Activated T-helper 1 cell treated with anti-CD3 and anti-CD28 coated beads, Interleukin-12 subunit alpha, Interleukin-12 subunit beta, Interleukin-2, Interleukin-4 antibody, amounts not matched to agents 30 ng/mL and 10 ng/mL and 1 ng/mL, durations not matched to agents 14 hours and 24 hours and 36 hours (primary cell): ENCODE measurements at regions of chr16 and their contacts with region 1.

Region 1: GRCh38 chr16:56916571-56917403 is 15.2 kb upstream of the HERPUD1 start:
- DNase-seq: peak; percentile 43
- H3K4me3 Mint-ChIP-seq: peak overlapping the region; percentile 71
- H3K27ac Mint-ChIP-seq: peak overlapping the region; percentile 93
- H3K4me1 Mint-ChIP-seq: peaks cover 50% of the 10 kb centered on the region
- H3K27me3 Mint-ChIP-seq: no peaks in the 10 kb centered on the region

Region 2: GRCh38 chr16:56781528-56781961 is 135.2 kb before region 1 on chr16:
- intact Hi-C with region 1: no loop called
- DNase-seq: no peak
- H3K4me3 Mint-ChIP-seq: no peak overlapping the region
- H3K27ac Mint-ChIP-seq: no peak overlapping the region
- H3K4me1 Mint-ChIP-seq: peaks cover 39% of the 10 kb centered on the region
- H3K27me3 Mint-ChIP-seq: no peaks in the 10 kb centered on the region

Region 3: GRCh38 chr16:56866943-56867830 is 49.6 kb before region 1 on chr16:
- intact Hi-C with region 1: loop called (anchors 2 kb)
- DNase-seq: peak; percentile 24
- H3K4me3 Mint-ChIP-seq: no peak overlapping the region
- H3K27ac Mint-ChIP-seq: no peak overlapping the region
- H3K4me1 Mint-ChIP-seq: peaks cover 22% of the 10 kb centered on the region
- H3K27me3 Mint-ChIP-seq: no peaks in the 10 kb centered on the region

Region 4: GRCh38 chr16:56931892-56932720 is 15.3 kb after region 1 on chr16 and contains the start of gene HERPUD1:
- intact Hi-C with region 1: loop called (anchors 1 kb)
- DNase-seq: peak; percentile 99
- H3K4me3 Mint-ChIP-seq: peak within 1 kb of the TSS; percentile 95
- H3K27ac Mint-ChIP-seq: peak within 1 kb of the TSS; percentile 94
- H3K4me1 Mint-ChIP-seq: peaks cover 41% of the 10 kb centered on the region
- H3K27me3 Mint-ChIP-seq: no peaks in the 10 kb centered on the region
- total RNA-seq, gene HERPUD1: 176 and 178 TPM in 2 replicates

Region 5: DNA sequence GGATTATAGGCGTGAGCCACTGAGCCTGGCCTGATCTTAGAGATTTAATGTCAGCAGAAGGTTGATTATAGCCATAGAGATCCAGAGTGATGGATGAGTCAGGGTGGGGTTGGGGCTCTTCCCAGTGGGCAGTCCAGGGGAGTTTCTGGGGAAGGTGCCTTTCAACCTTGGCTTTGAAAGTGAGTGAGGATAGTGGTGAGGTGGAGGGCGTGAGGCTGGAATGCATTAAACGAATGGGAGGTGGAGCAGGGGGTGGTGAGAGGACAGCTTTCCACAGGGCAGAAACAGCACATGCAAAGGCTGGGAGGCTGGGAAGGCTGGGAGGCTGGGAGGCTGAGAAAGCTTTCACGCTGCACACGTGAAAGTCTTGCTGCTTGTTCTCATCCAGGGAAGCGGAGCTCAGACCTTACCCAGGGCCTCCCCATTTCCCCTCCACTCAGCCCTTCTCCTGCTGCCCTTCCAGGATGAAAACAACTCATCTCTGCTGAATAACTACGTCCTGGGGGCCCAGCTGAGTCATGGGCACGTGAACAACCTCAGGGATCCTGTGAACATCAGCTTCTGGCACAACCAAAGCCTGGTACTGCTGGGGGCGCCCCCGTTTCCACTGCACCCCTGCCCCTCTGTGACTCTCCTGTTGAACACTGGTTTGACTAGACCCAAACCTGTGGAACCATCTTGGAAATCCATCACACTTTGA is 647.9 kb after region 1 on chr16:
- intact Hi-C with region 1: no loop called
- DNase-seq: no peak
- H3K4me3 Mint-ChIP-seq: no peak overlapping the region
- H3K27ac Mint-ChIP-seq: no peak overlapping the region
- H3K4me1 Mint-ChIP-seq: no peaks in the 10 kb centered on the region
- H3K27me3 Mint-ChIP-seq: no peaks in the 10 kb centered on the region